H1 (cell line): ENCODE measurements at regions of chr3 and their contacts with region 1.

Region 1: DNA sequence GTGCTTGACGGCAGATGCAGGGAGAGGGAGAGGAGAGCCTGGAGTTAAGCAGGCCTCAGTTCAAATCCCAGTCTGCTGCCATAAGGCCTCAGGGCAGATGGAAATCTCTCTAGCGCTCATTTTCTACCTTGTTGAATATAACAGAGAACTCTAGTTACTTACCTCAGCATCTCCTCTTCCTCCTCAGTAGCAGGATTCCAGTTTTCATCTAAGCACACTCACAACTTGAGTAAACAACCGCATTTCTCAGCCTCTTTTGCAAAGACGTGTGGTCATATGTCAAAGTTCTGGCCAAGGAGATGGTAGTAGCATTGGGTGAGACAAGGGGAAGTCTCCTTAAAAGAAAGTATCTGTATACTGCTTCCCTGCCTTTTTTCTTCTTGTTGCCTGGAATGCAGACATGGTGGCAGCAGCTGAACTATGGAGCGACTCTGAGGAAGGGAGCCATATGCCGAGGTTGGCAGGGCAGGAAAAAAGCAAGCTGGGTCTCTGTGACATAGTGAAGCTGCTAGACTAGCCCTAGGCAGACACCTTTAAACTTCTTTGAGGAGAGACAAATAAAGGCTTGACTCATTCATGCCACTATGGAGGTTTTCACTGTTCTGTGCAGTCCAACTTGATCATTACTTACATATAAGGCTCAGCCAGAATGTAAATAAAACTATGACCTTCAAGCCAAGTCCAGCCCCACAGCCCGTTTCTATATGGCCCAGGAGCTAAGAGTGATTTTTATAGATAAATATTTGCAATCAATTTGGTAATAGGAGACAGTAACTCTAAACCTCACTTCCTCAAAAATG is 30.4 kb upstream of the PRICKLE2 start:
- DNase-seq: no peak
- H3K4me3 ChIP-seq: no peak overlapping the region
- H3K27ac ChIP-seq: no peak overlapping the region
- H3K4me1 ChIP-seq: no peaks in the 10 kb centered on the region; a peak in 2 of 7 replicates
- H3K27me3 ChIP-seq: no peaks in the 10 kb centered on the region
- CTCF ChIP-seq: no peak
- EP300 ChIP-seq: no peak
- POLR2A ChIP-seq: no peak
- RAD21 ChIP-seq: no peak

Region 2: DNA sequence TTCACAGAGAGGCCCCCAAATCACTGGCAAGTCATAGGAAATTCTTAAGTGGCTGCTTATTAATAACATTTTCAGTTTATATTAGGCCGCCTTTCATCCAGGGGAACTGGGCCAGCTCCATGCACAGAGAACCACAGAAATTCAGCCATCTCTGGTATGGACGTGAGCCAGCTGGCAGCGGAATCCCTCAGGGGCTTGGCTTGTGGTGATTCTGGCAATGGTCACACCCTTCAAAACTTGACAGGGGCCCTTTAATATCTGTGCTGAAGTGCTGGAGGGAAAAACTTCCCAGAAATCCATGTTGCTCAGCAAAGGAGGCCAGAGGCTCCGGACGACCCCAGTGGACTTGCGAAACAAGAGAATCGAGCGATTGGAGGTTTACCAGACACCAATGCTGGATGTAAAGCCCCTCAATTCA is 41.7 kb before region 1 on chr3:
- CTCF ChIA-PET with region 1: no interaction called
- POLR2A ChIA-PET with region 1: no interaction called
- DNase-seq: no peak
- H3K4me3 ChIP-seq: no peak overlapping the region
- H3K27ac ChIP-seq: no peak overlapping the region
- H3K4me1 ChIP-seq: peaks cover 10 to 22% (median 15%) of the 10 kb centered on the region in 4 experiments; a peak in 6 of 7 replicates
- H3K27me3 ChIP-seq: peaks cover 0 to 11% (median 4%) of the 10 kb centered on the region in 4 experiments; a peak in 2 of 7 replicates
- CTCF ChIP-seq: no peak
- EP300 ChIP-seq: no peak
- POLR2A ChIP-seq: no peak
- RAD21 ChIP-seq: no peak

Region 3: GRCh38 chr3:64244011-64244942 is 11.4 kb before region 1 on chr3:
- CTCF ChIA-PET with region 1: interaction called, 22 read pairs
- POLR2A ChIA-PET with region 1: interaction called, 5 read pairs
- DNase-seq: no peak
- H3K4me3 ChIP-seq: no peak overlapping the region
- H3K27ac ChIP-seq: no peak overlapping the region
- H3K4me1 ChIP-seq: no peaks in the 10 kb centered on the region; a peak in 1 of 7 replicates
- H3K27me3 ChIP-seq: no peaks in the 10 kb centered on the region
- CTCF ChIP-seq: peak in 2 of 3 experiments; percentile 61 to 93; a peak in 3 of 4 replicates
- EP300 ChIP-seq: no peak
- POLR2A ChIP-seq: no peak
- RAD21 ChIP-seq: peak; percentile 38 to 51; a peak in 3 of 4 replicates

Region 4: DNA sequence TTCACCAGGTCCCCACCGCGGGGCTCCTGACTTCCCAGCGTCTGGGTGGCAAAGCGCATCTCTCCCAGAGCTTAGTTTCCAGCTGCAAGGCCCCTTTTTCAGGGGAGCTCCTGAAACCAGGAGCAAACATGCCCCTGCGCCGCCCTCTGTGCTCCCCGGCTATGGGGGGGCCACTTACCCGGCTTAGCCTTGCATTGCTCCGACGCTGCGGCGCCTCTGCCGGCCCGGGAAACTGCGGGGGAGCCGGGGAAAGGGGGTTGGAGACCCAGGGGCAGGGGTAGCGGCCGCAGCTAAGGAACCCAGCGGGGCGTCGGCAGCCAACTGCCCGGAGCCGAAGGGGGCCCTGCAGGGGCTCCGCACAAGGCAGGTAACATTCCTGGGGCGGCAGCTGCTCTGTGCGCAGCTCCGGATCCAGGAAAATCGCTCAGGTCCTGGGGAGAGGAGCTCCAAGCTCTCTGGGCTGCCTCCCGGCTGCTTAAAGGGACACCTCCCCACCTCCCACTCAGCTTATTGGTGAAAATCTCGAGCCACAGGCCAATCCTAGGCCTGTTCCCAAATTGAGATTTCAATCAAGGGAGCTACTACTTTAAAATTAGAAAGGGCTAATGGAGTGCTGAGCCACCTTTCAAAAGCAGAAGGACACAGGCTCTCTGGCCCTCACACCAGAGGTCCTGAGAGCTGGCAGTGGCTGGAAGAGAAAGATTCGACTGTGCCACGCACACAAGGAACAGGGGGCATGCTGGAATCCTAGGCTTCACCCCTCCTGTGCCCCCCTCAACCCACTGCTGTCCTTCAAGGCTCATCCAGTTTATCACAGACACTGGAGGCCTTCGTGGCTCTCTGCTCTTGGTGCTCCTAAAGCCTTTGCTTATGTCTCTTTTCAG is 12.2 kb after region 1 on chr3:
- CTCF ChIA-PET with region 1: interaction called, 20 read pairs
- POLR2A ChIA-PET with region 1: interaction called, 3 read pairs
- DNase-seq: peak; percentile 51 to 77
- H3K4me3 ChIP-seq: peak overlapping the region; percentile 57 to 70 (median 68)
- H3K27ac ChIP-seq: no peak overlapping the region
- H3K4me1 ChIP-seq: peaks cover 0 to 18% (median 9%) of the 10 kb centered on the region in 4 experiments; a peak in 4 of 7 replicates
- H3K27me3 ChIP-seq: no peaks in the 10 kb centered on the region
- CTCF ChIP-seq: no peak
- EP300 ChIP-seq: no peak; a peak in 1 of 3 replicates
- POLR2A ChIP-seq: no peak
- RAD21 ChIP-seq: no peak

Region 5: DNA sequence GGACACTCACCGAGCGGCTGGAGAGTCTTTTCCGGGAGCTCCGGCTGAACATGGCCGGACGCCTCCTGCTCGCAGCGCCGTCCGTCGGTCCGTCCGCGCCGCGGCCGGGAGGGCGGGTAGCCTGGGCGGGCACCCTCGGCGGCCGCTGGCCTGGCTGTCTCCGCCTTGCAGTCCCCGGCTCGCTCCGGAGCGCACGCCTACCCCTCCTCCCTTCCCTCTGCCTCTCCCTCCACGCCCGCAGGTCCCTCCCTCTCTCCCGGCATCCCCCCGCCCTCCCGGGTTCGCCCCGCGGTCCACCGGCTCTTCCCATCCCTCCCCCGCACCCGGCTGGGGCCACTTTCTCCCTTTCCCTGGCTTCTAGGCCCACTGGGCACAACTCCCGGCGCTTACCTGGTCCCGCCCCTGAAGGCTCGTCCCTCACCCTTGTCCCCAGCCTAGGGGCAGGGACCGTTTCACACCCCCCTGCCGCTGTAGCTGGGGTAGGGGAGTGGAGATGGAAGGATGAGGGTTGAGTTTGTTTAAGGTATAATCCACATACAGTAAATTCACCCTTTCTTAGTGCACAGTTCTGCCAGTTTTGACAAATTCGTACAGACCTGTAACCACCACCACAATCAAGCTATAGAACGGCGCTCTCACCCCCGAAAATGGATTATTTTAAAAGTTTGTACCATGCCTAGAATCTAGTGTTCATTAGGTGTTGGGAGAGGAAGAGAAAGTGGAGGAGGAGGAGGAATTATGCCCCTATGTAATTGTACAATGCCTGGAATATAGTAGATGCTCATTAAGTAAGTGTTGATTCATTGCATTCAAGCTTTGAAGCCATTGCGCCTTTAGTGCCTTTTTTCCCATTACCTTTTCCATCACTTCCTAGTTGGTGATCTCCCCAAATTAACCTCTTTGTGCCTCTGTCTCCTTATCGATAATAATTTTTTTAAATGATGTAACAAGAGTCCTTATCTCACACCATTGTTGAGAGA is 189.9 kb after region 1 on chr3:
- CTCF ChIA-PET with region 1: no interaction called
- POLR2A ChIA-PET with region 1: no interaction called
- DNase-seq: peak; percentile 54 to 90
- H3K4me3 ChIP-seq: peak overlapping the region; percentile 63 to 82 (median 74)
- H3K27ac ChIP-seq: no peak overlapping the region
- H3K4me1 ChIP-seq: peaks cover 4 to 25% (median 17%) of the 10 kb centered on the region in 4 experiments
- H3K27me3 ChIP-seq: no peaks in the 10 kb centered on the region; a peak in 2 of 7 replicates
- CTCF ChIP-seq: no peak
- EP300 ChIP-seq: no peak
- POLR2A ChIP-seq: 0 out of 3 replicates have a peak, but pooled peaks of 1 of the 2 experiments have one; percentile 24
- RAD21 ChIP-seq: no peak; a peak in 1 of 4 replicates

Region 6: GRCh38 chr3:64494145-64494915 is 238.6 kb after region 1 on chr3:
- CTCF ChIA-PET with region 1: no interaction called
- POLR2A ChIA-PET with region 1: no interaction called
- DNase-seq: no peak
- H3K4me3 ChIP-seq: no peak overlapping the region
- H3K27ac ChIP-seq: no peak overlapping the region
- H3K4me1 ChIP-seq: peaks cover 16 to 24% (median 19%) of the 10 kb centered on the region in 4 experiments
- H3K27me3 ChIP-seq: peaks cover 0 to 8% (median 7%) of the 10 kb centered on the region in 4 experiments; a peak in 3 of 7 replicates
- CTCF ChIP-seq: no peak
- EP300 ChIP-seq: no peak
- POLR2A ChIP-seq: no peak
- RAD21 ChIP-seq: no peak